ENCODE measurements at regions of chr15 and their contacts with region 1.

Region 1: DNA sequence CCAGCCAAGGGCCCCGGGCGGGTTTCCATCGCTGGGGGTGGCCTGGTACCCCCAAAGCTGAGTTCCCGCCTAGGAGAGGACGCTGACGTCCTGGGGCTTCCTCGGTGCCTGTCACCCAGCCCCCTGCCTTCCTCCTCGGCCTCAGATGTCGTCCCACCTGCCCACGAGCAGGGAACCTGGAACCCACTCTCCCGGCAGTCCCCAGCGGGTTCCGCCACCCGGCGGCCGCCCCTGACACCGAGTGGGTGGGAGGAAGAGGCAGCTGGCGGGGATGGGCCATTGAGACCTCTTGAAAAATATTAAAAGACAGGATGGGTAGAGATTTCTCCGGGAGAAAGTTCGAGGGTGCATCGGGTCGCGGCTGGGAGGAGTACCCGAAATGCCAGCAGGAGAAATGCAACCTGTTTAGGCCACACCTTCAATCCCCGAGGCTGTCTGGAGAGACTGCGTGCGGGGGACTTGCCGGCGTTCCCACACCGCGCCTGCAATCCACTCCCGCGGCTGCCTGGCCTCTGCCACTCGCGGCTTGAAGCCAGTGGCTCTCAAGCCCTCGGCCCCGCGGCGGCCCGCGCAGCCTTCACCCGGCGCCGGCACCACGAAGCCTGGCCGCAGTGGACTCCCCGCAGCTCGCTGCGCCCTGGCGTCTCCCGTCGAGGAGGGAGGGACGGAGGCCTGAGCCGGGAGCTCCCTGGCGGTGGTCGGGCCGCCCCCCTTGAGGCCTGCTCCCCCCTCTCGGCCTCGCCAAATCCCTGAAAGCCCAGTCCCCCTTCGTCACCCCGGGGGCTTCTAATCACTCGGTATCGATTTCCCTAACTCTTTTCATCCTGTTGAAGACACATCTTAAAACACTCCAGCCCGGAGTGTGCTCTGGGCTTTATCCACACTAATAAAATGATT is 8.6 kb upstream of the NR2F2 start:
- DNase-seq: peak; percentile 67
- H3K4me3 ChIP-seq: peak overlapping the region; percentile 18 to 89 (median 29)
- H3K27ac ChIP-seq: peak overlapping the region; percentile 85
- H3K4me1 ChIP-seq: peaks cover 74% of the 10 kb centered on the region
- H3K27me3 ChIP-seq: no peaks in the 10 kb centered on the region
- CTCF ChIP-seq: peak; percentile 7 to 27
- POLR2A ChIP-seq: no peak

Region 2: GRCh38 chr15:95760501-95760900 is 561.4 kb before region 1 on chr15:
- CTCF ChIA-PET with region 1: no interaction called
- POLR2A ChIA-PET with region 1: interaction called, 5 read pairs
- dilution Hi-C with region 1: no loop called
- intact Hi-C with region 1: loop called (anchors 1 kb)
- DNase-seq: peak; percentile 23
- H3K4me3 ChIP-seq: no peak overlapping the region
- H3K27ac ChIP-seq: no peak overlapping the region
- H3K4me1 ChIP-seq: peaks cover 10% of the 10 kb centered on the region
- H3K27me3 ChIP-seq: no peaks in the 10 kb centered on the region
- CTCF ChIP-seq: no peak
- POLR2A ChIP-seq: no peak

Region 3: GRCh38 chr15:96247621-96248305 is 74.1 kb before region 1 on chr15:
- CTCF ChIA-PET with region 1: no interaction called
- POLR2A ChIA-PET with region 1: no interaction called
- dilution Hi-C with region 1: no loop called
- intact Hi-C with region 1: no loop called
- DNase-seq: no peak
- H3K4me3 ChIP-seq: no peak overlapping the region
- H3K27ac ChIP-seq: no peak overlapping the region
- H3K4me1 ChIP-seq: no peaks in the 10 kb centered on the region
- H3K27me3 ChIP-seq: no peaks in the 10 kb centered on the region
- CTCF ChIP-seq: no peak
- POLR2A ChIP-seq: no peak

Region 4: GRCh38 chr15:96273317-96274086 is 48.4 kb before region 1 on chr15:
- CTCF ChIA-PET with region 1: interaction called, 16 read pairs
- POLR2A ChIA-PET with region 1: interaction called, 23 read pairs
- dilution Hi-C with region 1: no loop called
- intact Hi-C with region 1: loop called (anchors 1 kb)
- DNase-seq: peak; percentile 94
- H3K4me3 ChIP-seq: no peak overlapping the region
- H3K27ac ChIP-seq: peak overlapping the region; percentile 90
- H3K4me1 ChIP-seq: peaks cover 41% of the 10 kb centered on the region
- H3K27me3 ChIP-seq: no peaks in the 10 kb centered on the region
- CTCF ChIP-seq: no peak
- POLR2A ChIP-seq: peak; percentile 84

Region 5: DNA sequence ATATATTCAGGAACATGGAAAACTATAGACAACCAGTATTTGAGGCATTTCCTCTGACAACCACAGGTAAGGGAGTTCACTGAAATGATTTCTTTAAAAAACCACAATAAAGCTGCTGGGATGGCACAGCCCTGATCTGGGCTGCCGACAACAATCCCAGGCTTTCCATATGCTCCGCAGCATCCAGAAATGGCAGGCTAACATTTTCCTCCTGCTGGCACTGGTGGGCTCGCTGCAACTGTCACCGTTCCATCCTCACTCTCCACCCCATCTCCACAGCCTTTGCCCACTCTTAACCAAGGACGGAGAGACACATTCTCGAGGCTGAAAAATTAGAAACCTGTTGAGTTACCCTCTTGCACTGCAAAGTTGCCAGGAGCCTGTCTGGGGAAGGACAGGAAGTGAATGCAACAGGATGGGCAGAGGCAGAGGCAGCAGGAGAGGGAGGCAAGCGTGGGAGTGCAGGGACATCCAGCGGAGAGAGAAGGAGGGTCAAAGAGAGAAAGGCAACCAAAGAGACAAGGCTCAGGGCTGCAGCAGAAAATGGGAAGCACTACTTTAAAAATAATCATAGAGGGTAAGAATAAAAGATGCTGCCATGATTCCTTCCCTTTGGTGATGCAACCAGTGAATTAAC is 1559.6 kb after region 1 on chr15:
- CTCF ChIA-PET with region 1: no interaction called
- POLR2A ChIA-PET with region 1: no interaction called
- dilution Hi-C with region 1: no loop called
- intact Hi-C with region 1: no loop called
- DNase-seq: no peak
- H3K4me3 ChIP-seq: no peak overlapping the region
- H3K27ac ChIP-seq: no peak overlapping the region
- H3K4me1 ChIP-seq: no peaks in the 10 kb centered on the region
- H3K27me3 ChIP-seq: no peaks in the 10 kb centered on the region
- CTCF ChIP-seq: no peak
- POLR2A ChIP-seq: no peak

Measured in endothelial cell of umbilical vein (primary cell).